Caco-2 (cell line): ENCODE measurements at regions of chr10 and their contacts with region 1.

Region 1: GRCh38 chr10:63711867-63712716 is 190.9 kb downstream of the REEP3 start:
- DNase-seq: peak; percentile 53 to 75
- H3K4me3 ChIP-seq: no peak overlapping the region
- H3K4me3 Mint-ChIP-seq: no peak overlapping the region
- H3K27ac Mint-ChIP-seq: peak overlapping the region; percentile 33
- H3K4me1 ChIP-seq: peaks cover 48% of the 10 kb centered on the region
- H3K4me1 Mint-ChIP-seq: peaks cover 39% of the 10 kb centered on the region
- H3K27me3 ChIP-seq: no peaks in the 10 kb centered on the region
- H3K27me3 Mint-ChIP-seq: no peaks in the 10 kb centered on the region
- CTCF ChIP-seq: no peak

Region 2: GRCh38 chr10:63521416-63522276 is 190.4 kb before region 1 on chr10:
- CTCF ChIA-PET with region 1: no interaction called
- POLR2A ChIA-PET with region 1: interaction called, 5 read pairs
- intact Hi-C with region 1: loop called (anchors 10 kb)
- DNase-seq: peak; percentile 79 to 86
- H3K4me3 ChIP-seq: peak overlapping the region; percentile 96
- H3K4me3 Mint-ChIP-seq: peak overlapping the region; percentile 83
- H3K27ac Mint-ChIP-seq: peak overlapping the region; percentile 92
- H3K4me1 ChIP-seq: peaks cover 17% of the 10 kb centered on the region
- H3K4me1 Mint-ChIP-seq: peaks cover 43% of the 10 kb centered on the region
- H3K27me3 ChIP-seq: no peaks in the 10 kb centered on the region
- H3K27me3 Mint-ChIP-seq: no peaks in the 10 kb centered on the region
- CTCF ChIP-seq: no peak

Region 3: GRCh38 chr10:63665670-63666134 is 46.4 kb before region 1 on chr10:
- CTCF ChIA-PET with region 1: no interaction called
- POLR2A ChIA-PET with region 1: no interaction called
- intact Hi-C with region 1: loop called (anchors 2 kb)
- DNase-seq: peak in 1 of 2 experiments; percentile 17
- H3K4me3 ChIP-seq: no peak overlapping the region
- H3K4me3 Mint-ChIP-seq: peak overlapping the region; percentile 87
- H3K27ac Mint-ChIP-seq: peak overlapping the region; percentile 89
- H3K4me1 ChIP-seq: peaks cover 11% of the 10 kb centered on the region
- H3K4me1 Mint-ChIP-seq: peaks cover 15% of the 10 kb centered on the region
- H3K27me3 ChIP-seq: no peaks in the 10 kb centered on the region
- H3K27me3 Mint-ChIP-seq: no peaks in the 10 kb centered on the region
- CTCF ChIP-seq: no peak

Region 4: DNA sequence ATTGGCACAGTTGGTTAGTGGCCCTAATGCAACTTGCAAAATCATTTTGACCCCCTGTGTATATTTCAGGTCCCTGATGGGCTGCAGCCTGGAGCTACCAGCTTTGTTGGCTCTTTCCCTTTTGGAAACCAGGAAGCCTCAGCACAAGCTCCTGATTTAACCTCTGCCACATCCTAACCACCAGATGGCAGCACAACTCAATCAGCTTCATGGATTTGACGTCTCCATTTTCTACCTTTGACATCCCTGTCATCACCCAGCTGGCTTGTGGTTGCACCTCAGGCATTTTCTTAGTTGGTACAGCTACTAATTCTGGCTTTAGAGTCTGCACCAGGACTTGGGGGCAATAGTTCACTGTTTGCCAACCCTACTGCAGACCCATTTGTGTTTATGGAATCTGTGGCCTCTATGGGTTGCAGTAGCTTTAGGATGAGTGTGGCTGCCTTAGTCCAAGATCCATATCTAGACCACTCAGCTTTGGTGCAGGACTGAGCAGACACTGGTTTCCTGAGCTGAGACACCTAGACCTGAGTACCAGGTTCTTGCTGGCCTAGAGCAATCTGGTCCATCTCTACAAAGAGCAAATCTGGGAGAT is 265.3 kb after region 1 on chr10:
- CTCF ChIA-PET with region 1: no interaction called
- POLR2A ChIA-PET with region 1: no interaction called
- intact Hi-C with region 1: no loop called
- DNase-seq: peak; percentile 66 to 68
- H3K4me3 ChIP-seq: no peak overlapping the region
- H3K4me3 Mint-ChIP-seq: no peak overlapping the region
- H3K27ac Mint-ChIP-seq: no peak overlapping the region
- H3K4me1 ChIP-seq: no peaks in the 10 kb centered on the region
- H3K4me1 Mint-ChIP-seq: peaks cover 7% of the 10 kb centered on the region
- H3K27me3 ChIP-seq: no peaks in the 10 kb centered on the region
- H3K27me3 Mint-ChIP-seq: peaks cover 7% of the 10 kb centered on the region
- CTCF ChIP-seq: peak; percentile 77 to 85

Region 5: GRCh38 chr10:65017523-65017922 is 1305.4 kb after region 1 on chr10:
- CTCF ChIA-PET with region 1: no interaction called
- POLR2A ChIA-PET with region 1: no interaction called
- intact Hi-C with region 1: no loop called
- DNase-seq: no peak
- H3K4me3 ChIP-seq: no peak overlapping the region
- H3K4me3 Mint-ChIP-seq: no peak overlapping the region
- H3K27ac Mint-ChIP-seq: no peak overlapping the region
- H3K4me1 ChIP-seq: no peaks in the 10 kb centered on the region
- H3K4me1 Mint-ChIP-seq: no peaks in the 10 kb centered on the region
- H3K27me3 ChIP-seq: no peaks in the 10 kb centered on the region
- H3K27me3 Mint-ChIP-seq: no peaks in the 10 kb centered on the region
- CTCF ChIP-seq: no peak